WTC11 (cell line): ENCODE measurements at regions of chr1 and their contacts with region 1.

Region 1: GRCh38 chr1:182789138-182790076 is at the start of gene NPL:
- DNase-seq: peak; percentile 76
- ATAC-seq: peak; percentile 83
- H3K4me3 Mint-ChIP-seq: peak within 1 kb of the TSS; percentile 85
- H3K27ac Mint-ChIP-seq: no peak within 1 kb of the TSS
- H3K4me1 Mint-ChIP-seq: peaks cover 10% of the 10 kb centered on the region; the same call in 1 of the 2 replicates
- H3K27me3 Mint-ChIP-seq: peaks cover 65% of the 10 kb centered on the region
- CTCF ChIP-seq: no peak
- total RNA-seq, gene NPL: 3.4 to 4.1 TPM (median 3.6 TPM) in 3 replicates

Region 2: DNA sequence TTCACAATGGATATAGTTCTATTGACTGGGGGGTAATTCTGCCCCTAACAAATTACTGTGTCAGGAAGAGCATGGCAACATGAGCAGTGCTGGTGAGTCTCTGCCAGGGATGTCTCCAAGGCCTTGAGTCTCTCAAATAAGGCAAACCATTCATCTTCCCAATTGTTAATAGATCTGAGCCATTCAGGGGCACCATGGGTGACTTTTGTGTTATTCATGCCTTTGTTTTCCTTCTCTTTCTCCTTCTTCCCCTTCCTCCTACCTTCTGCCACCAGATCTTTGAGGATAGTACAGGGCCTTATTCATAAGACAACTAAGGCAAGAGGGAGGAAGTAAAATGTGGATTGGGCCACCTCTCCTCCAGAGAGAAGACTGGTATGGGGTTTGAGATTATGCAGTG is 339.3 kb before region 1 on chr1 and contains the start of gene RGSL1:
- CTCF ChIA-PET with region 1: interaction called, 10 read pairs
- POLR2A ChIA-PET with region 1: no interaction called
- DNase-seq: no peak
- ATAC-seq: peak; percentile 64
- H3K4me3 Mint-ChIP-seq: no peak within 1 kb of the TSS
- H3K27ac Mint-ChIP-seq: no peak within 1 kb of the TSS
- H3K4me1 Mint-ChIP-seq: peaks cover 40% of the 10 kb centered on the region
- H3K27me3 Mint-ChIP-seq: peaks cover 47% of the 10 kb centered on the region
- CTCF ChIP-seq: no peak
- total RNA-seq, gene RGSL1: not detected in 3 replicates

Region 3: GRCh38 chr1:182588500-182589452 is 200.6 kb before region 1 on chr1 and contains the start of gene RNASEL:
- CTCF ChIA-PET with region 1: interaction called, 669 read pairs
- POLR2A ChIA-PET with region 1: no interaction called
- DNase-seq: peak; percentile 70
- ATAC-seq: peak; percentile 99
- H3K4me3 Mint-ChIP-seq: peak within 1 kb of the TSS; percentile 67
- H3K27ac Mint-ChIP-seq: peak within 1 kb of the TSS; percentile 75
- H3K4me1 Mint-ChIP-seq: peaks cover 19% of the 10 kb centered on the region
- H3K27me3 Mint-ChIP-seq: peaks cover 3% of the 10 kb centered on the region; the same call in 1 of the 2 replicates
- CTCF ChIP-seq: no peak
- total RNA-seq, gene RNASEL: 0.64 to 0.87 TPM (median 0.77 TPM) in 3 replicates

Region 4: GRCh38 chr1:182604169-182605164 is 184.9 kb before region 1 on chr1 and contains the start of gene RGS16:
- CTCF ChIA-PET with region 1: interaction called, 669 read pairs
- POLR2A ChIA-PET with region 1: interaction called, 5 read pairs
- DNase-seq: peak; percentile 96
- ATAC-seq: peak; percentile 92
- H3K4me3 Mint-ChIP-seq: no peak within 1 kb of the TSS
- H3K27ac Mint-ChIP-seq: no peak within 1 kb of the TSS
- H3K4me1 Mint-ChIP-seq: peaks cover 11% of the 10 kb centered on the region
- H3K27me3 Mint-ChIP-seq: peaks cover 39% of the 10 kb centered on the region
- CTCF ChIP-seq: no peak
- total RNA-seq, gene RGS16: 9.9 to 17.8 TPM (median 10.2 TPM) in 3 replicates

Region 5: DNA sequence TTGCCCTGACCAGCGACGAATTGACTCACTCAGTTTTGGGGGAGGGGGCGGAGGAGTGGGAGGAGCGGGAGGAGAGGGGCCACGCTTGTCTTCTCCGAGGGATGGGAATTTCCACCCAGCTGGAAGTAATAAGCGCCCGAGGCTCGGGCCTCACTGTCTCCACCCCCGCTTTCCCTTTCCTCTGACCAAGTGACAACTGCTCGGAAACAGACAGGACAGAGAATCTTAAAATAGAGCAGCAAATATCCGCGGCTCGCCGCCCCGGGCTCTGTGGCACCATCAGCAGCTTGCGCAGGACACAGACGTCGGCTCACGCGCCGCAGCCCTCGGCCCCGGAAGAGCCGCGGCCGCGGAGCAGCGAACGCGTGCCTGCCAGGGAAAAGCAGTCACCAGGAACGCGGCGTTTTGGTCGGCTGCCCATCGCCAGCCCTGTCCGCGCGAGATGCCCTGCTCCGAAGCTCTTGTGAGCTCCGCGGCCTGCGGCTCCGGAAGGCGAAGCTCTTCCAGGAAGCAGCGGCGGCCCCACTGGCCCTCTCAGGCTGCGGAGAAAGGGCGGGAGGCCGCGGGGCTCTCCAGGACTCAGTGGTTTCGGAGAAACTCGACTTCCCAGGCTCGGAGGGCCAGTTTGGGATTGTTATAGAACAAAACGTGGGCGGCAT is 174.5 kb before region 1 on chr1:
- CTCF ChIA-PET with region 1: interaction called, 84 read pairs
- POLR2A ChIA-PET with region 1: interaction called, 3 read pairs
- DNase-seq: peak; percentile 55
- ATAC-seq: peak; percentile 24
- H3K4me3 Mint-ChIP-seq: peak overlapping the region; percentile 71
- H3K27ac Mint-ChIP-seq: peak overlapping the region; percentile 86
- H3K4me1 Mint-ChIP-seq: peaks cover 81% of the 10 kb centered on the region
- H3K27me3 Mint-ChIP-seq: peaks cover 67% of the 10 kb centered on the region
- CTCF ChIP-seq: no peak

Region 6: DNA sequence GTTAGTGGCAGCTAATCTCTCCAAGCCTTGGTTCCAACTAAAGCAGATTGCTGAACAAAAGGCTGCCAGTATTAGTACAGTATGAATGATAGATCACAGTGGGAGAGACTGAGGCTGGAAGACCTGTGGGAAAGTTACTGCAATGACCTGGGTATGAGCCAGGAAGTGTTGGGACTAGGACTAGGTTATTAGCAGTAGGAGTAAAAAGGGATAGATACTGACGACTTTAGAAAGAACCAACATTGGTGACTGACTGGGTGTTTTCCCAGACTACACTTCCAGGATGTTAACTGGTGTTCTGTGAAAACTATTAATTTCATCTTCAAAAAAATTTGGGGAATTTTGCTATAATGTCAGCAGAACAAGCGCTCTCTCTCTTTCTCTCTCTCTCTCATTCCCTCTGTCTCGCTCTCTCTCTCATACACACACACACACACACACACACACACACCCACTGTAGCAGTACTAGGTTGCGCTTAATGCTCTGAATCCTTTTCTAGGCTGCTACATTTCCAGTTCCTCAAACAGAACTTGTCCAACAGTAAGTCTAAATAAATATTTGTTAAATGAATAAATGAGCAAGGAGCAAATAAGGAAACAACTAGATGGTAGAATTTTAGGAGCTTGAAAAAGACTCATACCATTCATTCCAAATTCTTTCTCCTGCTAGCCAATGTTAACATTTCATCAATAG is 57.4 kb before region 1 on chr1:
- CTCF ChIA-PET with region 1: no interaction called
- POLR2A ChIA-PET with region 1: no interaction called
- DNase-seq: no peak
- ATAC-seq: no peak
- H3K4me3 Mint-ChIP-seq: no peak overlapping the region
- H3K27ac Mint-ChIP-seq: no peak overlapping the region
- H3K4me1 Mint-ChIP-seq: peaks cover 15% of the 10 kb centered on the region
- H3K27me3 Mint-ChIP-seq: no peaks in the 10 kb centered on the region
- CTCF ChIP-seq: no peak

Region 7: GRCh38 chr1:182806015-182806678 is 16.7 kb after region 1 on chr1:
- CTCF ChIA-PET with region 1: interaction called, 15 read pairs
- POLR2A ChIA-PET with region 1: no interaction called
- DNase-seq: peak; percentile 82
- ATAC-seq: peak; percentile 98
- H3K4me3 Mint-ChIP-seq: no peak overlapping the region; the same call in 1 of the 2 replicates
- H3K27ac Mint-ChIP-seq: no peak overlapping the region
- H3K4me1 Mint-ChIP-seq: peaks cover 18% of the 10 kb centered on the region
- H3K27me3 Mint-ChIP-seq: no peaks in the 10 kb centered on the region
- CTCF ChIP-seq: no peak

Region 8: GRCh38 chr1:182811975-182812725 is 22.7 kb after region 1 on chr1:
- CTCF ChIA-PET with region 1: interaction called, 14 read pairs
- POLR2A ChIA-PET with region 1: no interaction called
- DNase-seq: no peak
- ATAC-seq: peak; percentile 80
- H3K4me3 Mint-ChIP-seq: no peak overlapping the region
- H3K27ac Mint-ChIP-seq: no peak overlapping the region
- H3K4me1 Mint-ChIP-seq: peaks cover 2% of the 10 kb centered on the region; the same call in 1 of the 2 replicates
- H3K27me3 Mint-ChIP-seq: no peaks in the 10 kb centered on the region
- CTCF ChIP-seq: no peak